ENCODE measurements at regions of chr3 and their contacts with region 1.

Region 1: DNA sequence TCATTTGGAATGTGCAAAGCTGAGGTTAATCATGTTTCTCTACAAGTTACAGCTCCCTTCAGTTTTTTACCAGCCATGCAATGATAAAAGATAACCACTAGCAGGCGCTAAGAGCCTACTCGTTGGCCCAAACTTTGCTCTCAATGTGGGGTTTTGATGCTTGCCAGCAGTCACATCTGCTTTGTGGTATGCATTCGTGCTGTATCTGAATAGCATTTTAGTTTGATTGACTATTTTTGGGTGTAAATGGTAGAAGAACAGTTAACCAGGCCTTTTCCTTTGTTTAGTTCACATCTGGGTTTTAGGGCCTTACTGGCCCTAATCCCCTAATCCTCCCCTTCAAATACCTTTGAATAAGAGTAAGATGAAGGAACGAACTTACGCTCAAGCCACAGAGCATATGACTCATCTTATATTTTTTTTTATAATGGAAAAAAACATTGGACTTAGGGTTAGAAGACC is 4.4 kb upstream of the CLDN11 start:
- DNase-seq: peak; percentile 52
- ATAC-seq: peak; percentile 34
- H3K4me3 ChIP-seq: no peak overlapping the region
- H3K27ac ChIP-seq: no peak overlapping the region
- H3K4me1 ChIP-seq: peaks cover 22% of the 10 kb centered on the region
- H3K27me3 ChIP-seq: no peaks in the 10 kb centered on the region; a peak in 1 of 5 replicates
- CTCF ChIP-seq: peak; percentile 91
- EP300 ChIP-seq: no peak
- POLR2A ChIP-seq: no peak
- RAD21 ChIP-seq: peak; percentile 91

Region 2: GRCh38 chr3:170098753-170099152 is 315.5 kb before region 1 on chr3:
- CTCF ChIA-PET with region 1: no interaction called
- POLR2A ChIA-PET with region 1: no interaction called
- in situ Hi-C with region 1: no loop called
- intact Hi-C with region 1: no loop called
- DNase-seq: no peak
- ATAC-seq: no peak
- H3K4me3 ChIP-seq: no peak overlapping the region
- H3K27ac ChIP-seq: no peak overlapping the region
- H3K4me1 ChIP-seq: no peaks in the 10 kb centered on the region
- H3K27me3 ChIP-seq: no peaks in the 10 kb centered on the region; a peak in 1 of 5 replicates
- CTCF ChIP-seq: no peak
- EP300 ChIP-seq: no peak
- POLR2A ChIP-seq: no peak
- RAD21 ChIP-seq: no peak

Region 3: GRCh38 chr3:170499565-170500156 is 85.4 kb after region 1 on chr3:
- CTCF ChIA-PET with region 1: interaction called, 16 read pairs
- POLR2A ChIA-PET with region 1: no interaction called
- in situ Hi-C with region 1: no loop called
- intact Hi-C with region 1: loop called (anchors 1 kb)
- DNase-seq: peak; percentile 79
- ATAC-seq: peak; percentile 99
- H3K4me3 ChIP-seq: no peak overlapping the region
- H3K27ac ChIP-seq: no peak overlapping the region
- H3K4me1 ChIP-seq: peaks cover 29% of the 10 kb centered on the region
- H3K27me3 ChIP-seq: no peaks in the 10 kb centered on the region
- CTCF ChIP-seq: peak; percentile 93
- EP300 ChIP-seq: no peak
- POLR2A ChIP-seq: no peak
- RAD21 ChIP-seq: peak; percentile 79

Region 4: DNA sequence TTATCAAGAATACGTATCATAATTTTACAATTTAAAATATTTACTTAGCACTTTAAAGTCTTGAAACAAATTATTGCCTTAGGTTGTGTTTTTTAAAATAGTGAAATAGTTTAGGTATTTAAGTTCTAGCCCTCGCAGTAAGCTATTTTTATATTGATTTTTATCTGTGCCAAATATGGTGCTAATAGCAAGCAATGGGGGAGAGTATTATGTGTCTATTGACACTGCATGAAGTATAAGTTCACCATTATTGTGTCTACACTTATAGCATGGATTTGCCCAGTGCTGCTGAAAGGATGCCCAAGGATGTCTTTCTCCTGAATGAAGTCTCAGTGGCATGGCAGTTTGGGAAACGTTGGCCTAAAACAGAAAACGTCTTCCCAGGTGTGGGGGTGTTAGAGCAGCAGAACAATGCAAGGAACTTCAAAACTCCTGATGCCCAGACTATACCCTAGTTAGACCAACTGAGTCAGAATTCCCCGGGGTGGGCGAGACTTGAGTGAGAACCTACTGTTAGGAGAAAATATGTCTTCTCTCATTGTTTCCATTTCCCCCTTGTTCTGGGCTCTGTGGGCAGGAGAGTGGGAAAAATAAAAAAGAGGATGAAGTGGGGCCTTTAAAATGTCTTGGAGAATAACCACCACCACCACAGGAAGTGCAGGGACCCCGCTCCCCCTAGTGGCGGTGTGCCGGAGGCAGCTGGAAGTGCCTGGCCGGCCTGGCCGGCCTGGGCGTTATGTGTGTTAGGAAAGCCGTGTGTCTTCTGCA is 275.8 kb after region 1 on chr3:
- CTCF ChIA-PET with region 1: interaction called, 32 read pairs
- POLR2A ChIA-PET with region 1: no interaction called
- in situ Hi-C with region 1: loop called (anchors 10 kb)
- intact Hi-C with region 1: loop called (anchors 1 kb)
- DNase-seq: peak; percentile 18
- ATAC-seq: peak; percentile 95
- H3K4me3 ChIP-seq: no peak overlapping the region
- H3K27ac ChIP-seq: no peak overlapping the region
- H3K4me1 ChIP-seq: no peaks in the 10 kb centered on the region
- H3K27me3 ChIP-seq: peaks cover 0 to 6% of the 10 kb centered on the region in 2 experiments; a peak in 1 of 5 replicates
- CTCF ChIP-seq: peak; percentile 78
- EP300 ChIP-seq: no peak
- POLR2A ChIP-seq: no peak
- RAD21 ChIP-seq: peak; percentile 68